Activated CD4-positive, alpha-beta T cell treated with anti-CD3 and anti-CD28 coated beads for 36 hours (primary cell): ENCODE measurements at regions of chr2 and their contacts with region 1.

Region 1: DNA sequence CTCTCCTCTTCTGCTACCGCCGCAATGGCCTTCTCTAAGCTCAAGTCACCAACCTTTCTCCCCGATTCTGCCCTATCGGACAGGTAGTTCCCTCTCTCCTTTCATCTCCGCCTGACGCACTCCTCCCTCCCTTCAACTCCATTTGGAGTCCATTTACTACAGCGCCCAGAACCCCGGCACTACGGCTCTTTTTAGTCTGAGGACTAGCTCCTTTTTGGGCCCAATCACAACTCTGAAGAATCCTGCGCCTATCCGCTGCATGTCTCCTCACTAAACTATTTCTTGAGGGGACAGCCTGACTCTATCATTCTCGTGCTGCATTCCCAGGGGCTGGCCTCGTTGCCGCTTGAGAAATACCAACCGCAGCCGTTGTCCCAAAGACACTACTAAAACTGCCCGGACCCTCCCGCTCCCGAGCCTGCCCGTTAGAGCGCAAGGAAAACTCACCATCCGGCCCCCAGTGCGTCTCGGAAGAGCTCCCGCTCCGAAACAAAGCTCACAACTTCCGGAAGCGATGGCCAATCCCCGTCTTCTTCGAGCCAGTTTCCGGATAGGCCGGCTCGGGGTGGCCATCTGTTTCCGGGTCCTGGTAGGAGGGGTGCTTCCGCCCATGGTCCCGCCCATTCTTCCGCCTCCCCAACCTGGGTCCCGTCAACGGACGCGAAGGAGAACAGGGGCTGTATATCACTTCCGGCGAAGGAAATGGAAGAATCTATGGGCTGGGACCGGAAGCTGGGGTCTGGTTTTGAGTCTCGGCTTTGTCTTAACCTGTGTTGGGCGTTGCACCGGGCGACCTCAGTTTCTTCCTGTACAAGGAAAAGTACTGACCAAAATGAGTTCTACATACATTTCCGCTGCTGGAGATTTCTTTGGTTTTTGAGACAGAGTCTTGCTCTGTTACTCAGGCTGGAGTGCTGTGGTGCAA is at the start of gene TPRKB:
- DNase-seq: peak; percentile 98
- ATAC-seq: peak; percentile 99
- H3K4me3 Mint-ChIP-seq: peak within 1 kb of the TSS; percentile 92
- H3K27ac Mint-ChIP-seq: peak within 1 kb of the TSS; percentile 94
- H3K4me1 Mint-ChIP-seq: peaks cover 14% of the 10 kb centered on the region
- H3K27me3 Mint-ChIP-seq: no peaks in the 10 kb centered on the region
- total RNA-seq, gene TPRKB: 23.3 to 35.3 TPM

Region 2: DNA sequence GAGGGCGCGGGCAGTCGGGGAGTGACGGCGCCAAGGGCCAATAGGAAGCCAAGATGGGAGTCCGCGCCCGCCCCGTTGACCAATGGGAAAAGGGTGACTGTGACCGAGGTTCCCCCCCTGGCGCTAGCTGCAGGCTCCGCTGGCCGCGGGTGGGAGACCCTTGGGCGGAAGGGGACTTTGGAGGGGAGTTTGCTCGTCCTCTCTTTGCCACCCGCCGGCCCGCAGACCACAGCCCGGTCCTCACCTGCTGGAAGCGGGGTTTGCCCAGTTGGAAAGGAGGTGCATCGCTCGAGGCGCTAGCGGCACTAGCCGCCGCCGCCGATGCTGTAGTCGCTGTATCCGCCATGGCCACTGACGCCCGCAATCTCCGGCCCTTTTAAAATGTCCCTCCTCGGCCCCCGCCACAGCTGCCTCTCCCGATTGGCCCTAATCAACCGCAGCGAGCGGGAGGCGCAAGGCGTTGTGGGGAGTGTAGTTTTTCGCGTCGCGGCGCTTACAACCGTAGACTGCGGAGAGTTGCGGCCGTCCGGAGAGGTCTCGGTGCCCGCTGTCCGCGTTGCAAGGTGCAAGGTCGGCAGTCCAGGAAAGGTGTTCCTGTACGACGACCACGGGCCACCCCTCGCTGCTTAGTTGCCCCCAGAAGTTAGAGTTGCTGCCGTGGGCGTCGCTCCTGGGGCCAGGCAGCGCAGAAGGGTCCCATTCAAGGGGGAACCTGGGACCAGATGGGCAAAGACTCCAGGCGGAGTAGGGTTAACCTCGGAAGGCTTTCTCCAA is 665.6 kb before region 1 on chr2 and contains the start of gene SFXN5:
- CTCF ChIA-PET with region 1: no interaction called
- POLR2A ChIA-PET with region 1: no interaction called
- intact Hi-C with region 1: loop called in 1 of 2 experiments (anchors 1 kb)
- DNase-seq: peak; percentile 97
- ATAC-seq: peak; percentile 96
- H3K4me3 Mint-ChIP-seq: peak within 1 kb of the TSS; percentile 82
- H3K27ac Mint-ChIP-seq: peak within 1 kb of the TSS; percentile 90
- H3K4me1 Mint-ChIP-seq: peaks cover 17% of the 10 kb centered on the region
- H3K27me3 Mint-ChIP-seq: no peaks in the 10 kb centered on the region
- total RNA-seq, gene SFXN5: 4.5 to 6.2 TPM

Region 3: GRCh38 chr2:73293534-73294171 is 443.5 kb before region 1 on chr2 and contains the start of gene EGR4:
- CTCF ChIA-PET with region 1: no interaction called
- POLR2A ChIA-PET with region 1: no interaction called
- intact Hi-C with region 1: loop called in 1 of 2 experiments (anchors 1 kb)
- DNase-seq: peak; percentile 95
- ATAC-seq: peak; percentile 96
- H3K4me3 Mint-ChIP-seq: peak within 1 kb of the TSS; percentile 68
- H3K27ac Mint-ChIP-seq: no peak within 1 kb of the TSS
- H3K4me1 Mint-ChIP-seq: peaks cover 12% of the 10 kb centered on the region
- H3K27me3 Mint-ChIP-seq: peaks cover 65% of the 10 kb centered on the region
- total RNA-seq, gene EGR4: 0.18 to 0.41 TPM

Region 4: DNA sequence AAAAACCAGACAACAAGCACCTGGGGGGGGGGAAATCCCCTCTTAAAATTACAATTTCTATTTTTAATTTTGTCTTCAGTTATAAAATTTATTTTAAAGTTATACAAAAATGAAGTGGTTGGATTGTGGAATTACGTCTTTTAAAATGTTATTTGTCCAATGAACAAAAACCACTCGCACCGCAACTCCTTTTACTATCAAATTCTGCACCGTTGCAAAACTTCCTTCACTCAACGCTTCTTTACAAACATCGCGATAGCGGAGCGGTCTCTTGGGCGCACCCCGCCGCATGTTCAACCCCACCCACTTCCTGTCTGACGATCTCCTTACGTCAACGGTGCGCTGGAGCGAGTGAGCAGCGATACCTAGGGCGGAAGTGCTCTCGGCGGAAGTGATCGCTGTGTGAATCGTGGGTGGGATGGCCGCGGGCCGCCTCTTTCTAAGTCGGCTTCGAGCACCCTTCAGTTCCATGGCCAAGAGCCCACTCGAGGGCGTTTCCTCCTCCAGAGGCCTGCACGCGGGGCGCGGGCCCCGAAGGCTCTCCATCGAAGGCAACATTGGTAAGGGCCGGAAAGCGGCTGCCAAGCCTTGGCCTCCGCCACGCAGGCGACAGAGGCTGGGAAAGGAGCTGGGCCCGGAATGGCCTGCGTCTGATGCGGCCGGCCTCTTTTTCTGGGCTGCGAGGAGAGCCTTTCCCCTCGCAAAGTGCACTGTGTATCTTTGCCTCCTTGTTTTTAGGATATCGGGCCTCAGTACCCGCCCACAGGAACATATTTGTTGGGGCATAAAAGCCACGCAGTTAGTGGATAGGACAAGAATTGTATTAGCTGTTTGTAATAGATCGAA is 189.6 kb after region 1 on chr2 and contains the start of gene DGUOK:
- CTCF ChIA-PET with region 1: no interaction called
- POLR2A ChIA-PET with region 1: no interaction called
- intact Hi-C with region 1: loop called in 1 of 2 experiments (anchors 1 kb)
- DNase-seq: peak; percentile 99
- ATAC-seq: peak; percentile 99
- H3K4me3 Mint-ChIP-seq: peak within 1 kb of the TSS; percentile 87
- H3K27ac Mint-ChIP-seq: peak within 1 kb of the TSS; percentile 96
- H3K4me1 Mint-ChIP-seq: peaks cover 49% of the 10 kb centered on the region
- H3K27me3 Mint-ChIP-seq: no peaks in the 10 kb centered on the region
- total RNA-seq, gene DGUOK: 97.6 to 119 TPM

Region 5: DNA sequence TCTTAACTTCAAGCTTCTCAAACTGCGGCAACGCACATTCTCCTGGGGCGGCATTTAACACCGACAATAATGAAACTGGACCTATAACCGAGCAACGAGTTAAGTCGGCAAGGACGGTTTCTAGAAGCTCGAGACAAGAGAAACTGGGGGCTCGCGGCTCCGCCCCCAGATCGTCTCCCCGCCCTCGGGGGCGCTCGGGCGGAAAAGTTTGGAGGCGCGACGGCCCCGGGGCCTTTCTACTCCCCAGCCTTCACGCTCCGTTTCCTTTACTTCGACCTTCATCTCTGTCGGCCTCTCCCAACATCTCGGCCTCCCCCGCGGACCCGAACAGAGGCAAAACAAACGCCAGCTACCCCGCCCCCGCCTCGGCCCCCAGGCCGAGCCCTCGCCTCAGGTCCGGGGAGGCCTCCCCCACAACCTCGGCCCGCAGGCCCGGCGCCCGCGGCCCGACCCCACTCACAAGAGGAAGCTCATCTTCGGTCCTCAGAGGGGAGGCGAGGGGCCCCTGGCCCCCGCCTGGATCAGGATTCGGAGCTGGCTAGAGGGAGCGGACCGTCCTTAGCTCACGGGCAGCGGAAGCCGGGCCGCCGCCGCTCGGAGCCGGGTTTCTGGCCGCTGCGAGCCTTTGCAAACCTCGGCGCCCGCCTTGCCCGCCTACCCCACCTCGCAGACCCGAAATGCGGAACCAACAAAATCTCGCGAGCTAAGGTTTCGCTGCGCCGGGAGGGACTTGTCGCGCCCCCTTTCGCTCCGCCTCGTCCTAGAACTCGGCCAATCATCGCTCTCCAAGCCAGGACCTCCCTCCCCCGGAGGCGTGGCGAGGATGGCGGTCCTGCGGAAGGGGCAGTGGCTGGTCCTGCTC is 441.3 kb after region 1 on chr2 and contains the start of gene MOB1A:
- CTCF ChIA-PET with region 1: no interaction called
- POLR2A ChIA-PET with region 1: interaction called, 4 read pairs
- intact Hi-C with region 1: loop called in 1 of 2 experiments (anchors 1 kb)
- DNase-seq: peak; percentile 99
- ATAC-seq: peak; percentile 95
- H3K4me3 Mint-ChIP-seq: peak within 1 kb of the TSS; percentile 82
- H3K27ac Mint-ChIP-seq: peak within 1 kb of the TSS; percentile 87
- H3K4me1 Mint-ChIP-seq: peaks cover 42% of the 10 kb centered on the region
- H3K27me3 Mint-ChIP-seq: no peaks in the 10 kb centered on the region
- total RNA-seq, gene MOB1A: 96.6 to 149 TPM

Region 6: GRCh38 chr2:74458132-74458925 is 721.2 kb after region 1 on chr2 and contains the start of gene WBP1:
- CTCF ChIA-PET with region 1: no interaction called
- POLR2A ChIA-PET with region 1: no interaction called
- intact Hi-C with region 1: loop called in 1 of 2 experiments (anchors 1 kb)
- DNase-seq: peak; percentile 99
- ATAC-seq: peak; percentile 88
- H3K4me3 Mint-ChIP-seq: peak within 1 kb of the TSS; percentile 90
- H3K27ac Mint-ChIP-seq: peak within 1 kb of the TSS; percentile 99
- H3K4me1 Mint-ChIP-seq: peaks cover 37% of the 10 kb centered on the region
- H3K27me3 Mint-ChIP-seq: no peaks in the 10 kb centered on the region
- total RNA-seq, gene WBP1: 24.9 to 30.2 TPM